ENCODE measurements at regions of chr16 and their contacts with region 1.

Region 1: GRCh38 chr16:31229501-31229900 is 12.6 kb upstream of the PYDC1 start:
- DNase-seq: no peak
- H3K4me3 Mint-ChIP-seq: no peak overlapping the region
- H3K27ac Mint-ChIP-seq: no peak overlapping the region
- H3K4me1 Mint-ChIP-seq: no peaks in the 10 kb centered on the region
- H3K27me3 Mint-ChIP-seq: peaks cover 3% of the 10 kb centered on the region

Region 2: GRCh38 chr16:31248344-31248743 is 18.8 kb after region 1 on chr16:
- CTCF ChIA-PET with region 1: interaction called, 11 read pairs
- POLR2A ChIA-PET with region 1: no interaction called
- DNase-seq: no peak
- H3K4me3 Mint-ChIP-seq: no peak overlapping the region
- H3K27ac Mint-ChIP-seq: no peak overlapping the region
- H3K4me1 Mint-ChIP-seq: peaks cover 37% of the 10 kb centered on the region
- H3K27me3 Mint-ChIP-seq: peaks cover 3% of the 10 kb centered on the region

Measured in activated CD4-positive, alpha-beta T cell treated with anti-CD3 and anti-CD28 coated beads, Interleukin-2, amount 10 ng/mL, durations not matched to agents 7 days and 5 days (primary cell).